Activated T-helper 1 cell treated with anti-CD3 and anti-CD28 coated beads, Interleukin-12 subunit alpha, Interleukin-12 subunit beta, Interleukin-2, Interleukin-4 antibody, amounts not matched to agents 30 ng/mL and 10 ng/mL and 1 ng/mL, durations not matched to agents 14 hours and 24 hours and 36 hours (primary cell): ENCODE measurements at regions of chrX and their contacts with region 1.

Region 1: DNA sequence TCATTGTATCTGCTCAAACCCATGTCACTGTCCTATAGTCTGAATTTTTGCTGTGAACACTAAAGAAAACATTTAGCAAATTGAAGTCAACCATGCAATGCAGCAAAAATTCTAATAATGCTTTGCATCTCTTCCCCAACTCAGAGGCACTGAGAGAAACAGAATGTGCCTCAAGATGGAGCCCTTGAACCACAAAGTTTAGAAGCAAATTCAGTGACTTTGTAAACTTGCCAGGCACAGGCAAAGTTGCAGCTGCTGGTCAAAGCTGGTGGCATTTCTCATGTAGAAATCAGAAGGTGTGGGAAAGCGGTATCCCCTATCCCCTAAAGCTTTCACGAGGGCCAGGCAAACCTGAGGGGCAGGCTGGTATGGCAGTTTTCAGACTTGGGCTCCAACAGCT is 121.7 kb upstream of the DIPK2B start:
- DNase-seq: no peak
- H3K4me3 Mint-ChIP-seq: no peak overlapping the region
- H3K27ac Mint-ChIP-seq: no peak overlapping the region
- H3K4me1 Mint-ChIP-seq: no peaks in the 10 kb centered on the region
- H3K27me3 Mint-ChIP-seq: peaks cover under 1% of the 10 kb centered on the region

Region 2: DNA sequence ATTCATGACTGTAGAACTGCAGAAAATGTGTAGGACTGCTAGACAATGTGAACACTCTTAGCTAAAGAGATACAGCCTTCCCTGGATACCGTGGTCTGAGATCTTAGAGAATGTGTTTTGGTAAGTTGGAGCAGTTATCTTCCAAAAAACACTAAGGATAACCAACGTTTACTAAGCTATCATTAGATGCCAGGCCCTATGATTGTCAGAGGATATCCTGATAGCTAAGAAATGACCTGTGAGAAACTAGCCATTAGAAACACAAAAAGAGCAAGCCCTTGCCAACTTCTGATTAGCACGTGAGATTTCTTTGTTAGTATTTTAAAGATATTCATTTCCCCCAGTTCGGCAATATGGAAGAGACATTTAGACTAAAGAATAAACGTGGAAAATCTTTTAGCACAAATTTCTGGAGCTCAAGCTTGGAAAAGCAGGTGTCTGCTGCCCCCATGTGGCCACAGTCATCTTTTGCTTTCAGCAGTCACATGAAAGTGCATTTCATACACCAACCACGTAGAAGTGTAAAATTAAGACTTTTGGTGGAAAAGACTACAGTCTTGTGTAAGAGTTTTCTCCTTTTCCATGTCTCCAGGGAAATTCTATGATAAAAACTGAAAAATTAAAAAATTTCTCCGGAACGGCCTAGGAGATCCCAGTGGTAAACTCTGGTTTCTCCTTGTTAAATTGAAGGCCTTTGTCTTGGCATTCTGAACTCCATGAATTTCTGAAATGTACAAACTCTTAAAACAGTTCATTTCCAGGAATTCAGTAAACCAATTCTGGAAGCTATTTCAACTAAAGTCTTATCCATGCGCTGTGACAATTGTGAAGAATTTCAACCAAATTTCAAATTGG is 1086.4 kb after region 1 on chrX:
- intact Hi-C with region 1: loop called (anchors 2 kb)
- DNase-seq: peak; percentile 2
- H3K4me3 Mint-ChIP-seq: no peak overlapping the region
- H3K27ac Mint-ChIP-seq: no peak overlapping the region
- H3K4me1 Mint-ChIP-seq: no peaks in the 10 kb centered on the region
- H3K27me3 Mint-ChIP-seq: peaks cover 3% of the 10 kb centered on the region